Posterior cingulate gyrus (tissue), 11 donors: ENCODE measurements at regions of chr2 and their contacts with region 1.

Region 1: DNA sequence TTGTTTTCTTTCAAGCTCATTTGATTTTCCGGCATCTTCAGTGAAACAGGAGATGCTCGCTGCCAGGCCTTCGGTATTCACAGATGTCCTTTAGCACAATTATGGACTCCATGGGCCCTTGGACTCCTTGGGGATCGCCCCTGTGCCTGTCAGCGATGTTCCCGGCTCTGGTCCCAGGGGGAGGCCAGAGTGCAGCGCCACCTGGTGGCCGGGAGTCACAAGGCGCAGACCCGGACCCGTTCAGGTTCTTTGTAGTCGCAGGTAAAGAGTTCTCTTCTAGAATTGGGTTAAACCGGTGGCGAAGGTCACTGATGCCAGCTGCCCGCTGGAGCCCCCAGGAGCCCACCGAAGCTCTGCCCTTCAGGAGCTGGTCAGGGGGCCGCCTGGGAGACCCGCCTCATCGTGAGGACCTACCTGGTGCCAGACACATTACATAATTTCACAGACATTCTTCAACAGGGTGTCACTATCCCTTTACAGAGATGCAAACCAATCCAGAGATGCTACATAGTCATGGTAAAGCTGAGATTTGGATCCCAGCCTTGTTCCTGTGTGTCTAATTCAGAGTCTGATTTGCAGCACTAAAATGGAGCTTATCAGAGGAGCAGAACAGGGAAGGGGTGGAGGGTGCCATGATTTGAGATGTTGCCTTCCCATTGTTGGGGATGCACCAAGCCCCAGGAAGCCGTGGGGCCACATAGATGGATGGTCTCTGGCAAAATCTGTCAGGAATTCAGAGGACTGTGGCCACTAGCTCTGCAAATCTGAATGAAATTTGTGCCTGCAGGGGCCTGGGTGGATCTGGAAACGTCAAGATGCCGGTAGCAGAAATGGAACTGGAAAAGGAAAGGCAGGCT is 6.0 kb upstream of the INPP5D start:
- DNase-seq: peak in 7 of 10 donors; percentile 56 to 93 (median 79)

Region 2: DNA sequence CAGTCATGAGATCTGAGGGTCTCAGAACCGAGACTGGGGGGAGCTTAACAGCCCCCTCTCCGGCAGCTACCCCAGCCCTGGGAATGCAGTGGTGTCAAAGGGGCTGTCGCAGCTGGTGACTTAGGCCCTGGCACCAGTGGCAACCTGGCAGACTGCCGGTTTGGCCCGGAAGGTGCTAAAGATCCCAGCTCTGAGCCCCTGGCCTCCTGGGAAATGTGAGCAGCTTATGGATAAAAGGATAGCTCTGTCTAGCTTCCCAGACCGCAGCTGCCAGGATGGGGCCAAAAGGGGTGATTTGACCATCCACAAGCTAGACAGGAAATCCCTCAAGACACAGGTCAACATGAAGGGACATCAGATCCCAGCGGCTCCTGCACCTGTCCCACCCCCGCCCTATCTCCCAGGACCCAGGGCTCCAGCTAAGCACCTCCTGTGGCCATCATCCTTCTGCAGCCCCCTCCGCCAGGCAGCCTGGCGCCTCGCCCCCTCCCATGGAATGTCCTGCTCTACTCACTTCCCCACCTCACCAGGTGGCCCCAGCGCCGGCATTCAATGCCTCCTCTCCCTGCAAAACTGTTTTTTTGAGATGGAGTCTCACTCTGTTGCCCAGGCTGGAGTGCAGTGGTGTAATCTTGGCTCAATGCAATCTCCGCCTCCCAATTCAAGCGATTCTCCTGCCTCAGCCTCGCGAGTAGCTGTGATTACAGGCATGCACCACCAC is 453.9 kb before region 1 on chr2:
- intact Hi-C with region 1: loop called (anchors 10 kb)
- DNase-seq: peak in 2 of 10 donors; percentile 40 to 62

Region 3: DNA sequence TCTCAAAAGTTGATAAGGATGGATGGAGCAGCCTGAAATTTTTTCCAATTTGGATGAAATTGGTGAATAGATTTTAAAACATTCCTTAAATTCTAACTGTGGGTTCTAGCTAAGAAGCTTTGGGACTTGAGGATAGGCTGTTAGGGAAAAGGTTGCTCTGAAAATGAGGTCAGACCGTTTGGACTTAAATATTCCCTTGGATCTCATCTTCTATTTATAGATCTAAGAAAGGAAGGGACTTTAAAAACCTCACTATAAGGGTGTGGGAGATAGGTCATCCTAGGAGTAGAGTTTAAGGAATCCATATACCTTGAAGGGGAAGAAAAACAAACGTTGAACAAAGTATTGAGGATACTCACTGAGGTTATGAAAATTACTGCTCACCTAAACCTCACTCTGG is 201.5 kb before region 1 on chr2:
- intact Hi-C with region 1: loop called (anchors 1 kb)
- DNase-seq: no peak